Right ventricle myocardium superior (tissue), 1 donor: ENCODE measurements at regions of chr12 and their contacts with region 1.

Region 1: GRCh38 chr12:117836999-117837736 is 131.6 kb downstream of the KSR2 start:
- DNase-seq: peak; percentile 86
- ATAC-seq: peak; percentile 68

Region 2: GRCh38 chr12:117212563-117213190 is 624.5 kb before region 1 on chr12:
- intact Hi-C with region 1: loop called (anchors 5 kb)
- DNase-seq: peak; percentile 60
- ATAC-seq: peak; percentile 85

Region 3: DNA sequence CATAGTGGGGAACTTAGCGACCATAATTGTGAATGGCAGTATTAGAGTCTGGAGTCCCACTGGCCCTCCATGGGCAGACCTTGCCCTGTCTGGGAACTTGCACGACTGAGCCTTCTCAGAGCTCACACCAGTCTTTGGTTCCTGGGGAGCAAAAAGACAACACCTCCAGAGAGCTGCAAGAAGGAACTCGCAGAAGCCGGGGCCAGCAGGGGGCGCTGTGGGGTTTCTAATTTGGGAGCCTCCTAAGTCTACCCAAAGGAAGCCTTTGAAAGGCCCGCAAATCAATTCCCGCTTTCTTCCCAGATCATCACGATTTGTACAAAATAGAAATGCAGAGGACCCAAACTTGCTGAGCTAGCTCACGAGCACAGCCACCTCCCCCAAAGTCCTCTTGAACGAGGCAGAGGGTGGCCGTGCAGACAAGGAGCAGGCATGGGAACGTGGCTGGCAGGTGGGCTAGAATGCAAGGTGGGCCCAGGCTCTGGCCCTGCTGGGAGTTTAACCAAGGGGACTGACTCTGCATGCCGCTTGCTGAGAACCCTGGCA is 600.6 kb before region 1 on chr12:
- intact Hi-C with region 1: loop called (anchors 2 kb)
- DNase-seq: peak; percentile 88
- ATAC-seq: peak; percentile 79

Region 4: GRCh38 chr12:117367011-117367638 is 470.0 kb before region 1 on chr12:
- intact Hi-C with region 1: loop called (anchors 2 kb)
- DNase-seq: peak; percentile 49
- ATAC-seq: peak; percentile 82

Region 5: DNA sequence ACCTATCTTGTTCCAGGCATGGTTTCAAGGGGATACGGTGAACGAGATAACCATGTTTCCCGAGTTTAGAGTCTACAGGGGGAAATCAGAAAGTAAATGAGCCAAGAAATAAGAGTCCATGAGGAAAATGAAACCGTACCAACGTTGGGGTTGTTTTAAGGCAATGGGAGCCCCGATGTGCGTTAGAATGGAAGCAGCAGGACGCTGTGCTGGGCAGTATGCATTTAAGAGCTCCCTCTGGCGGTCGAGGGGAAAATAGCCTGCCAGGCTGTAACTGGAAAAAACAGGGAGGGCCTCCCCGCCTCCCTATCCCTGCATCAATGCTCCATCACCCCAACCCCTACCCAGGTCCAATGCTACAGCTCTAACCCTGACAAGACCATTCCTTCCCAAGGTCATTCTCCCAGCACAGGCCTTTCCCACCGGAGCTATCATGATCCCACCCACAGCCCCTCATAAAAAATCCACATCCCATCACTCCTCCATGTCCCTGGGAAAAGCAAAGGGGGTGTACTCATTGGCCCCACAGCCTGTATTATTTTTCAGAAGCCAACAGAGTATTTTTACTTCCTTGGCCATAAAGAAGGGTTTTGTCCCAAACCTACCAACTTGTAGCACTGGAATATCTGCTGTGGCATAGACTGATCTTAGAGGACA is 249.4 kb before region 1 on chr12:
- intact Hi-C with region 1: loop called (anchors 10 kb)
- DNase-seq: peak; percentile 62
- ATAC-seq: peak; percentile 77

Region 6: DNA sequence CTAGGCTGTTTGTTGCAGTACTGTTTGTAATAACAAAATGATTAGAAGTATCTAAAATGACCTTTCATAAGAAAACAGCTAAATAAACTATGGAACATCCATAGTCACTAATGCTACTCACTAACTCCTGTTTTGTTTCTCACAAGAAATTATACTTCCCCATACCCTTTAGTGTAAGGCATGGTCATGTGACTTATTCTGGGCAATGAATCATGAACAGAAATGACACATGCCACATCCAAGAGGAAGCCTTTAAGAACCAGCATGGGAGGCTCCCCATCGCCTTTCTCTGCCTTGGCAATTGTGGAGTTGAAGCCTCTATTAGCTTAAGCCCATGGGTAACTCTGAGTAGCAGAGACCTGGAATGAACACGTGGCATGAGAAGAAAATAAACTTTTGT is 82.3 kb after region 1 on chr12:
- intact Hi-C with region 1: no loop called
- DNase-seq: no peak
- ATAC-seq: no peak